ENCODE measurements at regions of chr12 and their contacts with region 1.

Region 1: GRCh38 chr12:19915392-19916195 is 452.7 kb upstream of the PDE3A start:
- DNase-seq: peak; percentile 44
- ATAC-seq: peak; percentile 66
- H3K4me3 ChIP-seq: no peak overlapping the region
- H3K27ac ChIP-seq: no peak overlapping the region
- H3K4me1 ChIP-seq: no peaks in the 10 kb centered on the region
- H3K27me3 ChIP-seq: no peaks in the 10 kb centered on the region
- CTCF ChIP-seq: peak; percentile 66
- POLR2A ChIP-seq: no peak
- RAD21 ChIP-seq: peak; percentile 77

Region 2: GRCh38 chr12:20194171-20194570 is 278.6 kb after region 1 on chr12:
- CTCF ChIA-PET with region 1: interaction called, 4 read pairs
- POLR2A ChIA-PET with region 1: no interaction called
- dilution Hi-C with region 1: no loop called
- in situ Hi-C with region 1: no loop called
- intact Hi-C with region 1: loop called (anchors 1 kb)
- DNase-seq: peak; percentile 17
- ATAC-seq: peak; percentile 68; the same call in 1 of the 2 replicates
- H3K4me3 ChIP-seq: no peak overlapping the region
- H3K27ac ChIP-seq: no peak overlapping the region
- H3K4me1 ChIP-seq: peaks cover under 1% of the 10 kb centered on the region; the same call in 1 of the 2 replicates
- H3K27me3 ChIP-seq: no peaks in the 10 kb centered on the region
- CTCF ChIP-seq: no peak
- POLR2A ChIP-seq: no peak
- RAD21 ChIP-seq: peak; percentile 20; the same call in 1 of the 2 replicates

Region 3: DNA sequence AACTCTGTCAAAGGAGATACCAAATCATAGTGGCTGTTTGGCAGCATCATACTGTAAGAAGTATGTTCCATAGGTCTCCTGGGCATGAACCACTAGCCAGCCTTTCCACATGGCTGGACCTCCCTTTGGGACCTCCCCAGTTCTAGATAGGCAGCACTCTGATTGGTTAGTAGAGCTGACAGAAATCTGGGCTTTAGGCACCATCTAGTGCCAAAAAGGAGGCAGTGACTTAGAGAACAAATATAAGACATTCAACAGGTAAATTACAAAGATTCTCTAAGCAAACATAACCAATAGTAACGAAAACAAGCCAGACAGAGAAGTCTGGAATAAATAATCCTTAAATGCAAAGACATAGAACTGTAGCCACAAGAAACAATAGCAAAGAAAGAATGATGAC is 304.7 kb after region 1 on chr12:
- CTCF ChIA-PET with region 1: interaction called, 3 read pairs
- POLR2A ChIA-PET with region 1: no interaction called
- dilution Hi-C with region 1: no loop called
- in situ Hi-C with region 1: loop called (anchors 25 kb)
- intact Hi-C with region 1: loop called (anchors 10 kb)
- DNase-seq: peak; percentile 34
- ATAC-seq: 0 out of 2 replicates have a peak, but pooled peaks have one; percentile 17
- H3K4me3 ChIP-seq: no peak overlapping the region
- H3K27ac ChIP-seq: no peak overlapping the region
- H3K4me1 ChIP-seq: no peaks in the 10 kb centered on the region
- H3K27me3 ChIP-seq: no peaks in the 10 kb centered on the region
- CTCF ChIP-seq: peak; percentile 34; the same call in 1 of the 2 replicates
- POLR2A ChIP-seq: no peak
- RAD21 ChIP-seq: peak; percentile 45

Region 4: DNA sequence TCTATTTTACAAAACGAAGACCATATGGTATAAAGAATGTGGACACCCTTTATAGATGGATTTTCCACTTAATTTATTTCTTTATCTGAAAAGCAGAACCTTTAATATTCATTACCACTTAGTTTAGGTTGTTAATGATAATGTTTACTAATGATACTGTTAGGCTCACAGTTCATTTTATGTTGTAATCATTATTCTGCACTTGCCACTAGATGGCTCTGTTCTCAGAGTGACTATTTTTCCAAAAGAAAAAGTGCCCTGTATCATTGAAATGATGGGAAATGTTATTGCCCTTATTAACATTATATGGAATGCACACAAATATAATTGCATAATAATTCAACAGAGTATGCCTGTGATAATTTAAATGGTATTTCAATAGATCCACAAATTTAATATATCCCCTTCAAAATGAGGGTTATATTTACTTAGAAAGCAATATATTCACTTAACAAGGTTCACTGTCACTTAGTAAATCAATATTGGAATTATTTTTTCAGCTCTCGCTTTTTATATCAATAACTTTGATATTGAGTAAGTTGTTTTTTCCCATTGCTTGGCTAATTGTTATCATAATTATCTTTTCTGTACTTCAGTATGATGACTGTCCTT is 548.4 kb after region 1 on chr12:
- CTCF ChIA-PET with region 1: no interaction called
- POLR2A ChIA-PET with region 1: no interaction called
- dilution Hi-C with region 1: no loop called
- in situ Hi-C with region 1: no loop called
- intact Hi-C with region 1: loop called (anchors 10 kb)
- DNase-seq: peak; percentile 16
- ATAC-seq: peak; percentile 56
- H3K4me3 ChIP-seq: no peak overlapping the region
- H3K27ac ChIP-seq: no peak overlapping the region
- H3K4me1 ChIP-seq: peaks cover 5% of the 10 kb centered on the region; the same call in 1 of the 2 replicates
- H3K27me3 ChIP-seq: no peaks in the 10 kb centered on the region
- CTCF ChIP-seq: peak; percentile 63
- POLR2A ChIP-seq: no peak
- RAD21 ChIP-seq: peak; percentile 60

Region 5: DNA sequence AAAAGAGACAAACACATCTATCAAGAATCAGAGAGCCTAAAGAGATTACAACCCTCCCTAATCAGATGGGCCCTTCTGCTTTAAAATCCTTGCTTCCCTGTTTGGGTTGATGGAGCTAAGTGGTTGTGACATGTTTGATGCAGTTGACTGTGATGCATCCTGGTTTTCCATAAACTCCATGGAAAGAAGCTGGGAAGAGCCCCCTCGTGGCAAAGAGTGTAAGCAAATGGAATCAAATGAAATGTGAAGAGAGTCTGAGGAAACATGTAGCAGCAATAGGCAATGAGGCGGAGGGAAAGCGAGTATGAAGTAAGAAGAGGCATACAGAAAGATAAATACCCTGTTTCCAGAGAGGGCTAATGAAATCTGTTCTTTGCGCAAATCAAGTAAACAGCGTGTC is 709.1 kb after region 1 on chr12:
- CTCF ChIA-PET with region 1: no interaction called
- POLR2A ChIA-PET with region 1: no interaction called
- dilution Hi-C with region 1: no loop called
- in situ Hi-C with region 1: loop called (anchors 10 kb)
- intact Hi-C with region 1: no loop called
- DNase-seq: peak; percentile 30
- ATAC-seq: peak; percentile 46; the same call in 1 of the 2 replicates
- H3K4me3 ChIP-seq: no peak overlapping the region
- H3K27ac ChIP-seq: no peak overlapping the region
- H3K4me1 ChIP-seq: no peaks in the 10 kb centered on the region; the same call in 1 of the 2 replicates
- H3K27me3 ChIP-seq: no peaks in the 10 kb centered on the region
- CTCF ChIP-seq: peak; percentile 41
- POLR2A ChIP-seq: no peak
- RAD21 ChIP-seq: peak; percentile 43